Activated CD4-positive, alpha-beta T cell treated with anti-CD3 and anti-CD28 coated beads for 36 hours (primary cell): ENCODE measurements at regions of chr7 and their contacts with region 1.

Region 1: DNA sequence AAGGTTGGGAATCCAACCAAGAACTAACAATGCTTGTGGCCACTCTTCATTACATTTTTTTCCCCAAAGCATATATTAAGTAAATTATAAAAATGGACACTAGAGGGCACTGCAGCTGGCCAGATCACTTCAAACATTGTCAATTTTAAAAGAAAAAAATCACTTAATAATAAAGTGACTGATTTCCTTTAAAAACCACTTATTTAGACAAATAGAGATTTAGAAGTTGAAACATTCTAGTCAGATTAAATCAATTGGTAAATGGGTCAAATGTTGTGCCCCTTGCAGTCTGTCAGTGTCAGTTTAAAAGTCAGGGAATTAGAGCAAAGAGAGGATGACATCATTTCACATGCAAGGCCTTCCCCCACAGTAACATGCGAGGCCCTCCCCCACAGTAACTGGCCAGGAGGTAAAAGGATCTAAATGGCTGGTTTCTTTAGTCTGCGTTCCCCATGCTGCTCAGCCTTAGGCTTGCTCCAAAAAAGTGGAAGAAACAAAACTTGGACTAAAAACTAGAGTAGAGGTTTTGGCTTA is 177.9 kb downstream of the SKAP2 start:
- DNase-seq: no peak
- ATAC-seq: no peak
- H3K4me3 Mint-ChIP-seq: no peak overlapping the region
- H3K27ac Mint-ChIP-seq: no peak overlapping the region
- H3K4me1 Mint-ChIP-seq: no peaks in the 10 kb centered on the region
- H3K27me3 Mint-ChIP-seq: peaks cover 16% of the 10 kb centered on the region

Region 2: GRCh38 chr7:26633557-26633956 is 53.0 kb before region 1 on chr7:
- CTCF ChIA-PET with region 1: no interaction called
- POLR2A ChIA-PET with region 1: no interaction called
- intact Hi-C with region 1: no loop called
- DNase-seq: no peak
- ATAC-seq: no peak
- H3K4me3 Mint-ChIP-seq: no peak overlapping the region
- H3K27ac Mint-ChIP-seq: no peak overlapping the region
- H3K4me1 Mint-ChIP-seq: no peaks in the 10 kb centered on the region
- H3K27me3 Mint-ChIP-seq: peaks cover 2% of the 10 kb centered on the region

Region 3: GRCh38 chr7:26659121-26659520 is 27.4 kb before region 1 on chr7:
- CTCF ChIA-PET with region 1: interaction called, 12 read pairs
- POLR2A ChIA-PET with region 1: no interaction called
- intact Hi-C with region 1: no loop called
- DNase-seq: no peak
- ATAC-seq: no peak
- H3K4me3 Mint-ChIP-seq: no peak overlapping the region
- H3K27ac Mint-ChIP-seq: no peak overlapping the region
- H3K4me1 Mint-ChIP-seq: peaks cover under 1% of the 10 kb centered on the region
- H3K27me3 Mint-ChIP-seq: peaks cover 14% of the 10 kb centered on the region

Region 4: DNA sequence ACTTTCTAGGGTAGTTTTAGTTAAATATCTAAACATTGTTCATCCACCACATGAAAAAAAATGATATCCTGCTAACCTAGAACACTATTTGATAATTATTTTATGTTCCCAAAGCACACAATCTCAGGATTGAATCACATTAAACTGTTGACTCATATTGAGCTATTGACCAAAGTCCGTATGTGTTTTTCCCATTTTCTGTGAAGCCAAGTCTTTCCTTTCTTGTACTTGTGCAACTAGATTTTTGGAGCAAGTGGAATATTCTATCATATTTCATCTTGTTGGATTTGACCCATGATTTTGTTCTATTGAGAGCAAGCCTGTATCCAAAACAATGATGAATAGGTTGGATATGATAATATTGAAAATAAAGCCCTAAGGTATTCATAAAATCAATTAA is 13.3 kb after region 1 on chr7:
- CTCF ChIA-PET with region 1: interaction called, 29 read pairs
- POLR2A ChIA-PET with region 1: no interaction called
- intact Hi-C with region 1: no loop called
- DNase-seq: no peak
- ATAC-seq: no peak
- H3K4me3 Mint-ChIP-seq: no peak overlapping the region
- H3K27ac Mint-ChIP-seq: no peak overlapping the region
- H3K4me1 Mint-ChIP-seq: no peaks in the 10 kb centered on the region
- H3K27me3 Mint-ChIP-seq: peaks cover 8% of the 10 kb centered on the region